ENCODE measurements at regions of chr4 and their contacts with region 1.

Region 1: GRCh38 chr4:54233277-54233696 is 4.2 kb downstream of the PDGFRA start:
- DNase-seq: no peak
- H3K4me3 ChIP-seq: peak overlapping the region; percentile 92
- H3K27me3 ChIP-seq: no peaks in the 10 kb centered on the region
- CTCF ChIP-seq: peak; percentile 80

Region 2: DNA sequence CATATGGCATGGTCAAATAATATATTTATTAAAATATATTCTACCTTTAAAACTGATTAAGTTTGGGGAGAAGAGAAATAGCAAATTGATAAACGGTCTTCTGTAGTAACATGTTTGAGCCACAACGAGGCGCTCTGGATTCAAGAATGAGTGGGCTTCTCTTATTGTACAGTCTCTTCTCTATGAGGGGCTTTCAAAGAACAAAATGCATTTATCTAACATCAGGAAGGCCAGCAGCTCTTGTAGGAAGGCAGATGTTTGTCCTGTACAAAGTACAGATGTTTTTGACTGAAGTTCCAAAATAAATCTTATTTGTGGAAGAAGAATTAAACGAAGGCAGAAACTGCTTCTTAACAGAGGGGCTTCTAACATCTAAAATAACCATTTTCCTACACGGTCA is 1217.6 kb before region 1 on chr4:
- CTCF ChIA-PET with region 1: interaction called, 57 read pairs
- POLR2A ChIA-PET with region 1: no interaction called
- DNase-seq: no peak
- H3K4me3 ChIP-seq: no peak overlapping the region
- H3K27me3 ChIP-seq: no peaks in the 10 kb centered on the region
- CTCF ChIP-seq: peak; percentile 81

Region 3: DNA sequence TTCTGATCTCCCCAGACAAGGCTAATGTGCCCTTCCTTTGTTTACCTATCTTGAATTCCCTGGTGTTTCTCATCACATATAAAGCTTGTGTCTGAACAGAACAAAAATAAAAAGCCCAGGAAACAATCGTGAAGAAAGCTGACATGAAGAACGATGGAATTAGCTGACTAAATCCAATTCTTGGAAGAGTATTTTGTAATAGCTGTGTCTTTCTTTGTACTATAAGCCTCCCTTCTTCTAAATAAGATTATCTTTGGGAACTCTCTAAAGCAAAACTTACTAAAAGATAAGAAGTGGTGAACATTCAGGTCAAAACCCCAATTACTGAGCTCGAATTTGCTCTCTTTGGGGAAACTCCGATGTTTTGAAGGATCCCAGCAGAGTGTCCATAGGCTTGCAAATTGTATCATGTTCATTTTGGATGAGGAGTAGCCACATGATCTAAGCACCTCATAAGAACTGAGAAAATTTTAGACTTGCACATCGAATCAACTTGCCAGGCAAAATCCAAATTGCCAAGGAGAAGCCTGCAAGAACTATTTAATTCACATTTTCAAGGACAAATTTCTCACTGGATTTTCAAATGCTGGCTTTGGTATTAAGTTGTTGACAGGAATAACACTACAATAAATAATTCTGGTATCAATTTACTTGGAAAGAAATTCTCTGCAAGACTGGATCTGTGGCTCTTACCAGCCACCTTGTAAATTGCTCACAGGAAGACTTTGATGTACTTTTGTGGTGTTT is 748.2 kb before region 1 on chr4:
- CTCF ChIA-PET with region 1: interaction called, 12 read pairs
- POLR2A ChIA-PET with region 1: no interaction called
- DNase-seq: no peak
- H3K4me3 ChIP-seq: no peak overlapping the region
- H3K27me3 ChIP-seq: no peaks in the 10 kb centered on the region
- CTCF ChIP-seq: no peak

Region 4: DNA sequence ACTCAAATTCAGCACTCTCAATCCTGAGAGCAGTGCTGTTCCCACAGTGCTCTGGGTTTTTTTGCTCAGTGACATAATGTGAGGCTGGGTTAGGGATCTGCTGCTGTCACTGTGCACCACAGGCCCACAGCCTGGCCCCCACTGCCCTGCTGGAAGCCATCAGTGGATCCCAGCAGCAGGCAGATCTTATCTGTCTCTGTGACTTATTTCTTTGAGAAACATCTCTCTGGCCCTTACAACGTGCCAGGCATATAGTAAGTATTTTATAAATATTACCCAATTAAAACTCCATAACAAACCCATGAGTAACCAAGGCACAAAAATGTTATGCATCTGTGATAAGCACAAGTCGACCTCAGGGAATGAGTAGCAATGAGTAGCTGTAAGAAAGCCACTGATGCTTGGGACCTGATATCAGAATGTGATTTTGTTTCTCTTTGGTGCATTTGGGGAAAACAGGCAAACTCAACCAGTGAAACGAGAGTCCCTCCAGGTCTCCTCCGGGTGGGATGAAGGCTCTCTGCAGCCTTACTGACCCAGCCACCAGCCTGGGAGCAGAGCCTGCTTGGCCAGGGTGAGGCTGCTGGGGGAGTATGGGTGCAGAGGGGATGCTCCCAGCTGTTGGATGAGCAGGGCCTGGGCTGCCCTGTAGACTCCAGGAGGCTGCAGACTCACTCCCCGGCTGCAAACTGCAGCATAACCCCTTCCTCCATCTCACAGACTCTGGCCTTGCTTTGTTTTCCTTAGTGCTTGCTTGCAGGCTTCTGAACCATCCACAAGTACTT is 469.3 kb before region 1 on chr4:
- CTCF ChIA-PET with region 1: interaction called, 18 read pairs
- POLR2A ChIA-PET with region 1: no interaction called
- DNase-seq: peak; percentile 75
- H3K4me3 ChIP-seq: no peak overlapping the region
- H3K27me3 ChIP-seq: no peaks in the 10 kb centered on the region
- CTCF ChIP-seq: no peak

Region 5: GRCh38 chr4:53914313-53915016 is 318.8 kb before region 1 on chr4:
- CTCF ChIA-PET with region 1: interaction called, 41 read pairs
- POLR2A ChIA-PET with region 1: interaction called, 7 read pairs
- DNase-seq: peak; percentile 65
- H3K4me3 ChIP-seq: no peak overlapping the region
- H3K27me3 ChIP-seq: no peaks in the 10 kb centered on the region; the same call in 1 of the 2 replicates
- CTCF ChIP-seq: no peak

Region 6: DNA sequence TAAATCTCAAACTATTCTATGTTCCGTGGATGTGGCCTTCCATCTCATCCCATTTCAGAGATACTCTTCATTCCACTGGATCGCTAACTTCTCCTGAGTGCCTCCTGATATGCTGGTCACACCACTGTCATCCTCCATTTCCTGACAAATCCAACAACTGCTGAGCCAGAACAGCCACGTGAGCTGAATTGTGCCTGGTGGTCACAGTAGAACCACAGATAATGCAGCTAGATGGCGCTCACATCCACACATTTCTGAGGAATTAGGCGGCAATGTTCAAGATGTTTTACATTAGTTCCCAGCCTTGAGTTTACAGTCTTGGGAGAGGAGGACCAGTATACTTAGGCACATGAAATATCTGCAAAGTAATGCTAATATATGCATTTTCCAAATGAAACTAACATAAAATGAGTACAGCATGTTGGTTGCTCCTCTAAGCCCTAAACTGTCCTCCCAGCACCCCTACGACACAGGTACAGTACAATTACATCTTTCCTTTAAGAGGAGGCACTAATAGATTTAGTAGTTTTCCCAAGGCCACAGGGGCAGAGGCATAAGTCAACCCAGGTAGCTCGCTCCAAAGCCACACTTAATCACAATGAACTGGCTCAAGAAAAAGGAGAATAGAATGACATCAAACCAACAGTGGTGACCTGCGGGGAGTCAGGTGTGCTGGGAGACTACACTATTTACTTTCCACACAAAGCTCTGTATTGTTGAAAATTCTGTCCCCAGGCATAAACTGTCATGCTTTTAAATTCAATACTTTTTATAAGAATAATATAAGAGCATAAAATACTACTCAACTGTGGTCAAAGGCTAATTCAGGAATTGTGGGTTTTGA is 303.1 kb before region 1 on chr4:
- CTCF ChIA-PET with region 1: interaction called, 34 read pairs
- POLR2A ChIA-PET with region 1: interaction called, 3 read pairs
- DNase-seq: peak; percentile 52
- H3K4me3 ChIP-seq: no peak overlapping the region
- H3K27me3 ChIP-seq: no peaks in the 10 kb centered on the region
- CTCF ChIP-seq: peak; percentile 73